ENCODE measurements at regions of chr1 and their contacts with region 1.

Region 1: GRCh38 chr1:64933296-64934070 is 32.9 kb downstream of the JAK1 start:
- DNase-seq: no peak
- ATAC-seq: peak; percentile 59
- H3K4me3 ChIP-seq: no peak overlapping the region
- H3K27ac ChIP-seq: peak overlapping the region; percentile 49; the same call in 1 of the 2 replicates
- H3K4me1 ChIP-seq: peaks cover 36% of the 10 kb centered on the region
- H3K27me3 ChIP-seq: no peaks in the 10 kb centered on the region
- CTCF ChIP-seq: no peak

Region 2: GRCh38 chr1:64875101-64875500 is 58.4 kb before region 1 on chr1:
- CTCF ChIA-PET with region 1: no interaction called
- POLR2A ChIA-PET with region 1: no interaction called
- in situ Hi-C with region 1: no loop called
- intact Hi-C with region 1: no loop called
- DNase-seq: no peak
- ATAC-seq: no peak
- H3K4me3 ChIP-seq: no peak overlapping the region
- H3K27ac ChIP-seq: no peak overlapping the region
- H3K4me1 ChIP-seq: no peaks in the 10 kb centered on the region
- H3K27me3 ChIP-seq: no peaks in the 10 kb centered on the region
- CTCF ChIP-seq: no peak

Region 3: GRCh38 chr1:65195495-65196417 is 262.3 kb after region 1 on chr1:
- CTCF ChIA-PET with region 1: interaction called, 10 read pairs
- POLR2A ChIA-PET with region 1: no interaction called
- in situ Hi-C with region 1: no loop called
- intact Hi-C with region 1: no loop called
- DNase-seq: no peak
- ATAC-seq: no peak
- H3K4me3 ChIP-seq: no peak overlapping the region
- H3K27ac ChIP-seq: no peak overlapping the region
- H3K4me1 ChIP-seq: no peaks in the 10 kb centered on the region
- H3K27me3 ChIP-seq: no peaks in the 10 kb centered on the region
- CTCF ChIP-seq: no peak

Measured in Panc1 (cell line).